Transverse colon (tissue), 4 donors: ENCODE measurements at regions of chr3 and their contacts with region 1.

Region 1: DNA sequence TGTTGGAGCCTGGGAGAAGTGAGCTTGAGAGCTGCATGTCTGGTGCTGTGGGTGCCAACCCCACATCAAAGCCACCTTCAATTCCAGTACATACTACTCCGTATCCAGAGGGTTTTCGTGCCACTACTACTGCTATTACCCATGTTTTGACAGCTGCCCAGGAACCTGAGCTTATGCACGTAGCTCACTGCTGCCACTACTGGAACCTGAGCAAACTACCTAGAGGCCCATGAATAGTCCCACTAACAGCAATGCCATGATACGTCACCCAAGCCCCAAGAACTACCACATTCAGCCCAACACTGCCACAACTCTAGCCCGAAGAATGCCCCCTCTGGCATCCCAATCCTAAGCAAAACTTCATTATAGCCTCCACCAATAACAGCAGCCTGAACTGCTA is 215.2 kb upstream of the BCHE start:
- DNase-seq: no peak
- H3K4me3 ChIP-seq: no peak overlapping the region
- H3K27ac ChIP-seq: no peak overlapping the region
- H3K4me1 ChIP-seq: no peaks in the 10 kb centered on the region
- H3K27me3 ChIP-seq: no peaks in the 10 kb centered on the region
- CTCF ChIP-seq: no peak
- EP300 ChIP-seq: no peak
- POLR2A ChIP-seq: no peak

Region 2: DNA sequence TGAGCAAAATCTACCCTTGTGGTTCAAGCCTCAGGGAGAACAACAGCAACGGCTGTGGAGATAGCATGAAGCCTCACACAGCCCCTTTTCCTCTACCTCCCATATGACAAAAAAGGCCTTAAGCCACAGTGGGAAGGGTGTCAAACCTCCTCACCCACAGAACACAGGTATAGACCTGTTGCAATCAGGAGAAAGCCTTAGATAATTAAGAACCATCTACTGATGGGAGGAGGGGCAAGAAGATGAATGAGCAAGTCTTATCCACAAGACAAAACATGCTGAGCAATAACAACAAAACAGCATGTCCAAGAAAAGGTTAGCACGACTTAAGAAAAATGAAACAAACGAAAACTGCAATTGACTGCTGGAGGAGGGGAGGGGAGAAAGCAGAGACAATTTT is 57.7 kb after region 1 on chr3:
- in situ Hi-C with region 1: no loop called
- intact Hi-C with region 1: loop called (anchors 2 kb)
- DNase-seq: no peak
- H3K4me3 ChIP-seq: no peak overlapping the region
- H3K27ac ChIP-seq: no peak overlapping the region
- H3K4me1 ChIP-seq: no peaks in the 10 kb centered on the region
- H3K27me3 ChIP-seq: no peaks in the 10 kb centered on the region
- CTCF ChIP-seq: no peak
- EP300 ChIP-seq: no peak
- POLR2A ChIP-seq: no peak

Region 3: DNA sequence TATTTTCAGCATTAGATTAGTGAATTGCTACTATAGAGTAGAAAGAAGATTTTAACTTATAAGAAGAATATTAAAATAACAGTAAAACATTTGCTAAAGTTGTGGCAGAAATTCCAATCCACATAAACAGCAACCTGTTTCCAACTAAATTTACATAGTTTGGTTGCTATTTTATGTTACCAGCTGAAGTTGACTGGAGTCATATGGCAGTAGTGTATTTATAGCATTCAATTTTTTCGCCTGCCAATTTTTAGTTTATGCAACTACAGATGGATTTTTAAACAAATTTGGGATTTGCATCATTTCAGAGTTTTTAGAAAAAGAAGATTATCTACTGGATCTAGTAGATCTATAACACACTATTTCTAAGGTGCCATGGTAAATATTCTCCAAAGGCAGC is 117.2 kb after region 1 on chr3:
- in situ Hi-C with region 1: loop called in 1 of 4 experiments (anchors 25 kb)
- intact Hi-C with region 1: no loop called
- DNase-seq: no peak
- H3K4me3 ChIP-seq: no peak overlapping the region
- H3K27ac ChIP-seq: no peak overlapping the region
- H3K4me1 ChIP-seq: no peaks in the 10 kb centered on the region
- H3K27me3 ChIP-seq: no peaks in the 10 kb centered on the region
- CTCF ChIP-seq: no peak
- EP300 ChIP-seq: no peak
- POLR2A ChIP-seq: no peak

Region 4: GRCh38 chr3:166425899-166426575 is 373.6 kb after region 1 on chr3:
- in situ Hi-C with region 1: no loop called
- intact Hi-C with region 1: no loop called
- DNase-seq: no peak
- H3K4me3 ChIP-seq: no peak overlapping the region
- H3K27ac ChIP-seq: no peak overlapping the region
- H3K4me1 ChIP-seq: no peaks in the 10 kb centered on the region
- H3K27me3 ChIP-seq: no peaks in the 10 kb centered on the region
- CTCF ChIP-seq: no peak
- EP300 ChIP-seq: no peak
- POLR2A ChIP-seq: no peak